A673 (cell line): ENCODE measurements at regions of chr17 and their contacts with region 1.

Region 1: DNA sequence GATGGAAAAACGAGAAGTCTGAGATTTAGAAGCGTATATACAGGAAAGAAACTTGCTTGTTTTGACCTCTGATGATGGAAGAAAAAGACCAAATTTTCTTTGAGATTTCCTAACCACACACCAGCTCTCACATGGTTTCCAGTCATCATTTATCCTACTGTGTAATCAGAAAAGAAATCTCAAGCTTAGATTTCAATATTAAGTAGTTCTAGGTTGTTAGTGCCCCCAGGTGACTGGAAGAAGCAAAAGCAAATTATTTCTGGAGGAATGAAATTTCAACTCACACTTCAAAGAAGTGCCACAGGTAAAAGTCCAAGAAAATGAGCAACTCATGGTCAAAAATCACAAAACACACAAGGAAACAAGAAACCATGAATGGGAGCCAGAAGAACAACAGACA is 51.8 kb upstream of the KDM6B start:
- DNase-seq: no peak
- H3K4me3 ChIP-seq: no peak overlapping the region
- H3K27ac ChIP-seq: no peak overlapping the region
- H3K4me1 ChIP-seq: no peaks in the 10 kb centered on the region
- H3K27me3 ChIP-seq: peaks cover 6% of the 10 kb centered on the region
- CTCF ChIP-seq: peak; percentile 40

Region 2: DNA sequence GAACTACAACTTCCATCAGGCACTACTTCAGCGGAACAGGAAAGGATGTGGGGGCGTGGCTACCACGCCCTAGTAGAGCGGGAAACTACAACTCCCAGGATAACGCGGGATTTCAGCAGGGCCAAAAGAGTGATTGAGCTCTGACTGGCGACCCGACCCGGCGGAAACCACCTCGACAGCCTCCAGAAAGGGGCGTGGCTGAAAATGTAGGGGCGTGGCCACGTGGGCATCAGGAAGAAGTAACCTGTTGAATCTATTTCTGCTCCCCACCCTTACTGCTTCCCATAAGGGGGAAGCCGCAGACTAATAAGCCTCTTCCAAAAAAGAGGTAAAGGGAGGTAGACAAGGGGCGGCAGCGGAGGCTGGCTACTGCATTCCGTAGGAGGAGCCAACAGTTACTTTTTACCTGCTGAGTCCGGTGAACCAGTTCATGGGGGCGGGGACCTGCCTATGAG is 347.0 kb before region 1 on chr17 and contains the start of gene TMEM102:
- CTCF ChIA-PET with region 1: no interaction called
- POLR2A ChIA-PET with region 1: no interaction called
- intact Hi-C with region 1: no loop called
- DNase-seq: peak; percentile 99
- H3K4me3 ChIP-seq: peak within 1 kb of the TSS; percentile 90
- H3K27ac ChIP-seq: peak within 1 kb of the TSS; percentile 41
- H3K4me1 ChIP-seq: peaks cover 30% of the 10 kb centered on the region
- H3K27me3 ChIP-seq: no peaks in the 10 kb centered on the region
- CTCF ChIP-seq: no peak
- total RNA-seq, gene TMEM102: 3.2 and 4.7 TPM in 2 replicates

Region 3: DNA sequence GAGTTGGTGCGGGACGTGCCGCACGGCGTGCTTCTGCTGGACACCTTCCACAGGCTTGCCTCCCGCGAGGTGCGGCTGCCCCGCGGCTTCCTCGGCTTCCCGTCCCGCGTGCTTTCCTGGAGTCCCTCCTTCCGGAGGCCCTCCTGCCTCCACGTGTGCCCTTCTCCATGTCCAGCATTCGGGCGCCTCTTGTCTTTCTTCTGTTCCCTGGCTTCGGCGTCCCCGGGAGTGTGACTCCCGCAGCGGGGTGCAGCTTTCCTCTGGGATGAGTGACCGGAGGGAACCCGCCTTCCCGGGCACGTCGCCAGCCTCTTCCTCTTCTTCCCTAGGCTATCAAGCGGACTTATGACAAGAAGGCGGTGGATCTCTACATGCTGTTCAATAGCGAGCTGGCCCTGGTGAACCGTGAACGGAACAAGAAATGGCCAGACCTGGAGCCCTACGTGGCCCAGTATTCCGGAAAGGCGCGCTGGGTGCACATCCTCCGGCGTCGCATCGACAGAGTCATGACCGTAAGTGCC is 41.7 kb before region 1 on chr17:
- CTCF ChIA-PET with region 1: interaction called, 17 read pairs
- POLR2A ChIA-PET with region 1: no interaction called
- intact Hi-C with region 1: no loop called
- DNase-seq: peak; percentile 26
- H3K4me3 ChIP-seq: peak overlapping the region; percentile 9
- H3K27ac ChIP-seq: no peak overlapping the region
- H3K4me1 ChIP-seq: peaks cover 3% of the 10 kb centered on the region
- H3K27me3 ChIP-seq: peaks cover 8% of the 10 kb centered on the region
- CTCF ChIP-seq: no peak

Region 4: DNA sequence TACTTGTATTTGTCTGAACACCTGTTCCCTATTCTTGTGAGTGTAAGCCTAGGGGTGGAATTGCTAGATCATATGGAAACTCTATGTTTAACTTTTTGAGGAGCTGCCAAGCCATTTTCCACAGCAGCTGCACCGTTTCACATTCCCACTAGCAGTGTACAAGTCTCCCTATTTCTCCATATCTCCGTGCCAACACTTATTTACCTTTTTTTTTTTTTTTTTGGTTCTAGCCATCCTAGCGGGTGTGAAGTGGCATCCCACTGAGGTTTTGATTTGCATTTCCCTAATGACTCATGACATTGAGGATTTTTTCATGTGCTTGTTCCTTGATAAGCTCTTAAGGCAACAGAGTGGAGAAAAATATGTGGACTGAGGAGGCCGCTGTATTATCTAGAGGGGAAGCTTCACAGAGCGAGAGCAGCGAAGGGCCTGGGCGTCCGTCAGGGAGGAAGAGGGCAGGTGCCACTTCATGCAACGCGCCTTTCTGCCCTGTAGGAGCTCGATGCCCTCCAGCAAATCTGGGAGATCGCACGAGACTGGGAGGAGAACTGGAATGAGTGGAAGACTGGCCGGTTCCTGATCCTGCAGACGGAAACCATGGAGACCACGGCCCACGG is 14.7 kb before region 1 on chr17:
- CTCF ChIA-PET with region 1: interaction called, 11 read pairs
- POLR2A ChIA-PET with region 1: no interaction called
- intact Hi-C with region 1: no loop called
- DNase-seq: peak; percentile 81
- H3K4me3 ChIP-seq: no peak overlapping the region
- H3K27ac ChIP-seq: no peak overlapping the region
- H3K4me1 ChIP-seq: peaks cover 5% of the 10 kb centered on the region
- H3K27me3 ChIP-seq: no peaks in the 10 kb centered on the region
- CTCF ChIP-seq: no peak

Region 5: DNA sequence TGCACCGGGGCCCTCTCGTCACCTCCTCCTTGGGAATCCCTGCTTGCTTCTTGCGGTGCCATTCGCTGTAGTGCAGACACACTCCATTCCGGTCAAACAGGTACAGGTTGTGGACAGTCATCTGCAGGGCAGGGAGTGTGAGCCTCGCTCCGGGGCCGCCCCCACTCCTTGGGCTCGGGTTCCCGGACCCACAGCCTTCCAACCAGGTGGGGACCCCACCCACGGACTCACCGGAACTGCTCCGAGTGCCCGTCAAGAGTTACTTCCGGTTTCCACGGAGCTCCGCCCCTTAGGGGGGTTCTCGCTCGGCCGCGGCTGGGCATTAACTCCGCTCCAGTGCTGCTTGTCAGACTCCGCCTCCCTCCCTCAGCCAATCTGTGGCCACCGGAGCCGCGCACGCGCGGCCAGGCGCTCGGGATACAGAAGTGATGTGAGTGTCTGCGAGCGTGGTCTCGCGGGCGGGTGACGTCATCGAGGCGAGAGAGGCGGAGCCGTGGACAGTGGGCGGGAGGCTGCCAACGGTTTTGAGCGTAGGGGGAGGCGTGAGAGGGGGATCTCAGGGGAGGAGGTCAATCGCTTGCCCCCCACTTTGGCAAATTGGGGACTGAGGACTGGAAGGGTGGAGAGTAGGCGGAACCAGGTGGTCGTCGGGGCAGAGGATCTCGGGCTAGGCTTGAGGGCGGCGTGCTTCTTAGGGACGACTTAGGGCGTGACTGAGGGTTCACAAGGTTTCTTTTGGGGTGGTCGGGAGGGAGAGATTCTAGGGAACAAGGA is 149.7 kb after region 1 on chr17 and contains the starts of genes CNTROB and TRAPPC1:
- CTCF ChIA-PET with region 1: no interaction called
- POLR2A ChIA-PET with region 1: no interaction called
- intact Hi-C with region 1: no loop called
- DNase-seq: peak; percentile 100
- H3K4me3 ChIP-seq: peak within 1 kb of the TSS; percentile 68
- H3K27ac ChIP-seq: peak within 1 kb of the TSS; percentile 88
- H3K4me1 ChIP-seq: peaks cover 23% of the 10 kb centered on the region
- H3K27me3 ChIP-seq: no peaks in the 10 kb centered on the region
- CTCF ChIP-seq: no peak
- total RNA-seq, gene CNTROB: 72.3 and 79.9 TPM in 2 replicates
- total RNA-seq, gene TRAPPC1: 111 and 140 TPM in 2 replicates